SK-N-SH (cell line): ENCODE measurements at regions of chr10 and their contacts with region 1.

Region 1: GRCh38 chr10:123994417-123995081 is 98.8 kb downstream of the CHST15 start:
- DNase-seq: peak; percentile 96
- H3K4me3 ChIP-seq: peak overlapping the region in 1 of 2 experiments; percentile 23; a peak in 1 of 4 replicates
- H3K27ac ChIP-seq: no peak overlapping the region
- H3K4me1 ChIP-seq: no peaks in the 10 kb centered on the region; a peak in 1 of 4 replicates
- H3K27me3 ChIP-seq: no peaks in the 10 kb centered on the region
- CTCF ChIP-seq: peak; percentile 71
- EP300 ChIP-seq: no peak
- RAD21 ChIP-seq: peak; percentile 92

Region 2: DNA sequence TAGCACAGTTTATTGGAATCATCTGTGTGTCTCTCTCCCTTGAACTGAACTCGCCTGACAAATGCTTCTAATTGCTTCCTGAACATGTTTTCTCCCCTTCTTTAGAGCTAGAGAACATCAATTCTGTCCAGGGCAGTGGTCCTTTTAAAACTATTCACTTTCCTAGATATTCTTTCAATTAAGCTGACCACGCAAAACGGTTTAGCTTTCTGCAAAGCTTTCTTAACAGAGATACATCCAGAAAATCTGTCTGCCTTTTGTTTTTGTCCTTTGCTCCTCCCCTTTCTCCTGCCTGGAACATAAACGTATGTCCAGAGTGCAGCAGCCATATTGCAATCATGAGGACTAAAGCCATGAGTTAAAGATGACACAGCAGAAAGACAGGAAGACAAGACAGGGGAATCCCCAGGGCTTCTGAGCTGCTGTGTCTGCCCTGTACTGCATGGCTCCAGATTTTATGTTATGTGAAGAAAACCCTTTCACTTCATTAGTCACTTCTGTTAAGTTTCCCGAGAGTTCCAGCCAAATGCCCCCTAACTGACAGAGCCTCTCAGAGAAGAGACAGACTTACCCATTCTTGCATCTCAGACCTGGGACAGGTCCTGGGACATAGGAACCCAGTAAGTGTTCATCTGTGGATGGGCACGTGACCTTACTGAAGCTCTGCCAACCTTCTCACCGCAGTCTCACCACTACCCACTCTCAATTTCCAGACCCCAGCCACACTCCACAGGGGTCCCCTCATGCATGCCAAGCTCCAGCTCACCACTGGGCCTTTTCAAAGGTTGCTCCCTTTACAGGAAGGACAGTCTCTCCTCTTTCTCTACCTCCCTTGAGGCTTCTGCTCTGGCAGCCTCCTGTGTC is 67.9 kb before region 1 on chr10:
- CTCF ChIA-PET with region 1: no interaction called
- POLR2A ChIA-PET with region 1: no interaction called
- DNase-seq: no peak
- H3K4me3 ChIP-seq: no peak overlapping the region
- H3K27ac ChIP-seq: no peak overlapping the region
- H3K4me1 ChIP-seq: no peaks in the 10 kb centered on the region; a peak in 1 of 4 replicates
- H3K27me3 ChIP-seq: no peaks in the 10 kb centered on the region
- CTCF ChIP-seq: no peak
- EP300 ChIP-seq: no peak
- RAD21 ChIP-seq: no peak

Region 3: GRCh38 chr10:124005991-124006392 is 11.4 kb after region 1 on chr10:
- CTCF ChIA-PET with region 1: interaction called, 38 read pairs
- POLR2A ChIA-PET with region 1: no interaction called
- DNase-seq: no peak
- H3K4me3 ChIP-seq: no peak overlapping the region
- H3K27ac ChIP-seq: no peak overlapping the region
- H3K4me1 ChIP-seq: no peaks in the 10 kb centered on the region
- H3K27me3 ChIP-seq: no peaks in the 10 kb centered on the region
- CTCF ChIP-seq: no peak
- EP300 ChIP-seq: no peak
- RAD21 ChIP-seq: no peak

Region 4: GRCh38 chr10:124087672-124088634 is 93.4 kb after region 1 on chr10:
- CTCF ChIA-PET with region 1: interaction called, 111 read pairs
- POLR2A ChIA-PET with region 1: no interaction called
- DNase-seq: peak; percentile 72
- H3K4me3 ChIP-seq: no peak overlapping the region
- H3K27ac ChIP-seq: no peak overlapping the region
- H3K4me1 ChIP-seq: peaks cover 0 to 16% of the 10 kb centered on the region in 2 experiments; a peak in 1 of 4 replicates
- H3K27me3 ChIP-seq: no peaks in the 10 kb centered on the region; the same call in 1 of the 2 replicates
- CTCF ChIP-seq: no peak
- EP300 ChIP-seq: no peak
- RAD21 ChIP-seq: no peak

Region 5: GRCh38 chr10:124231168-124232155 is 236.9 kb after region 1 on chr10:
- CTCF ChIA-PET with region 1: interaction called, 28 read pairs
- POLR2A ChIA-PET with region 1: no interaction called
- DNase-seq: no peak
- H3K4me3 ChIP-seq: no peak overlapping the region
- H3K27ac ChIP-seq: no peak overlapping the region
- H3K4me1 ChIP-seq: peaks cover 0 to 17% of the 10 kb centered on the region in 2 experiments; a peak in 1 of 4 replicates
- H3K27me3 ChIP-seq: no peaks in the 10 kb centered on the region
- CTCF ChIP-seq: no peak
- EP300 ChIP-seq: no peak
- RAD21 ChIP-seq: no peak

Region 6: DNA sequence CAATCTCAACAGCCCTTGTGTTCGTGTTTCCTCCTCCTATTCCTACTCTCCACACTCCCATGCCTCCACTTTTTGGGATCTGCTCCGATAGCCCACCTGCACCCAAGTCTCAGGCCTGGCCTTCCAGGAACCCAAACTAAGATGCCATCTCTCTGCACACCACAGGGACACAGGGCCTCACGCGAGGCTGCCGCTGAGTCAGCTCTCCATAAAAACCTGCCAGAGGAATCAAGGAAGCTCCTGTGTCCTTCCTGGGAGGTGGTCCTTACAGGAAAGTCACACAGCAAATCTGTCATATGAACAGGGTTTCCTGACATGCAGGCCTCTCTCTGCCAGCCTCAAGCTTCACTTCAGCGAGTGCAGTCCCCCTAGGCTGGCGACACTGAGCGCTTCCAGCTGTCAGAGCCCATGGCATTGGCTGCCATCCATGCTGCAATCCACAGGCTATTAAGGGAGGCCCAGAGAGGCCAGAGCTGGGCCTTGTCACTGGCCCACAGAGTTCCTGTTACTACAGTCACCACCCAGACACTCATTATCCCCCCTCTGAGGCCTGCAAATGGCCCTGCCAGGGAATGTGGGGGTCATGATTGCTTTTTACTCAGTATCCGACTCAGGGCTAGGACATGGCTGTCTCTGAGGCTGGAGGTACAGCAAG is 272.8 kb after region 1 on chr10:
- CTCF ChIA-PET with region 1: interaction called, 25 read pairs
- POLR2A ChIA-PET with region 1: no interaction called
- DNase-seq: peak; percentile 71
- H3K4me3 ChIP-seq: no peak overlapping the region
- H3K27ac ChIP-seq: no peak overlapping the region
- H3K4me1 ChIP-seq: peaks cover 0 to 13% of the 10 kb centered on the region in 2 experiments; a peak in 1 of 4 replicates
- H3K27me3 ChIP-seq: no peaks in the 10 kb centered on the region
- CTCF ChIP-seq: no peak
- EP300 ChIP-seq: 0 out of 4 replicates have a peak, but pooled peaks of 1 of the 2 experiments have one; percentile 25
- RAD21 ChIP-seq: 0 out of 2 replicates have a peak, but pooled peaks have one; percentile 1

Region 7: DNA sequence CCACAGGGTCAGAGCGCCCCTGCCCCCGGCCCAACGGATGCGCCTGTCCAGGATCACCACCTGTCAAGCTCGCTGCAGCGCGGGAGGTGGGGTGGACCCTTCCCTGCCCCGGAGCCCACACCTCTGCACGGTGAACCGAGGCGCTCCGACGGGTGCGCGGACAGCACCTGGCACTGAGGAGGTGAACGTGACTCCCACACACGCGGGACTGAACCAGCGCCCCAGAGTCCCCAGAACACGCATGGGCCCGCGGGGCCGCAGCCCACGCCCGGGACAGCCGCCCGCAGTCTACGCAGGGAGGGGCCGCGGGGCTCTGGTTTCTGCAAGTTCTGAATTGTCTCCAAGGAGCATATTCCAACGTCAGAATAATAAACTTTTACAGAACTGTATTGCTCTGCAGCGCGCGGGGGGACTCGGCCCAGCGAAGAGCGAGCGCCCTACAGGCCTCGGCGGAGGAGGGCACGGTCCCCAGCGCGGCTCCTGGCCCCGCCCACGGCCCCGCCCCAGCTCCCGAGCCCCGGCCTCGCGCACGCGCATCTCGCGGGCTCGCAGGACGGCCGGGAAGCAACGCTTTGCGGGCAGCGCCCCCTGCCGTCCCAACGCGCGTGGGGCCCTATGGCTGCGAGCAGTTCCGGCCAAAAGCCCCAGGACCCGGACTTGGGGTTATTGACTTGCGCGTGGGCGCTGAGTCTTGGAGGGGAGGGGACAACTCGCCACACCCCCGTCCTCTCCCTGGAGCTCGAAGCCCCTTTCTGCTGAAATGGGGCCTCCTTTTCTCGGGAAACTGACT is 394.5 kb after region 1 on chr10:
- CTCF ChIA-PET with region 1: interaction called, 520 read pairs
- POLR2A ChIA-PET with region 1: no interaction called
- DNase-seq: peak; percentile 100
- H3K4me3 ChIP-seq: peak overlapping the region; percentile 54 to 65
- H3K27ac ChIP-seq: no peak overlapping the region
- H3K4me1 ChIP-seq: peaks cover 0 to 6% of the 10 kb centered on the region in 2 experiments; a peak in 1 of 4 replicates
- H3K27me3 ChIP-seq: no peaks in the 10 kb centered on the region
- CTCF ChIP-seq: peak; percentile 87
- EP300 ChIP-seq: no peak
- RAD21 ChIP-seq: peak; percentile 94